ENCODE measurements at regions of chr2 and their contacts with region 1.

Region 1: GRCh38 chr2:205660521-205661124 is 21.7 kb upstream of the NRP2 start:
- DNase-seq: peak; percentile 98
- ATAC-seq: peak; percentile 90
- H3K4me3 ChIP-seq: no peak overlapping the region
- H3K27ac ChIP-seq: peak overlapping the region; percentile 40
- H3K4me1 ChIP-seq: peaks cover 23% of the 10 kb centered on the region
- H3K27me3 ChIP-seq: no peaks in the 10 kb centered on the region
- CTCF ChIP-seq: no peak
- POLR2A ChIP-seq: no peak
- RAD21 ChIP-seq: peak; percentile 5

Region 2: DNA sequence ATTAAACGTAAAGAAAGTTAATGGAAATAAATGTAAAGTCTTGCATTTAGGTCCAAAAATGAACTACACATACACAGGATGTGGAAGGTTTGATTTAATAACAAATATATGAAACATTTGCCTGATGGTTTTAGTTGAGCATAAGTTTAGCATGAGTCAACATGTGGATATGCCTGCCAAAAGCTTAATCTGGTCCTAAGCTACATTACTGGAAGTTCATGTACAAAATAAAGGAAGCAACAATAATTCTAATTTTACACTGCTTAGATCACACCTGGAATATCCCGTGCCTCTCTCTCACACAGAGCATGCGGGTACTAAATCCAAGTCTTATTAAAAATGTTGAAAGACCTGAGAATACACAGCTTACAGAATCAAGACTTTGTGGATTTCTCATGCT is 254.9 kb before region 1 on chr2:
- CTCF ChIA-PET with region 1: no interaction called
- POLR2A ChIA-PET with region 1: no interaction called
- dilution Hi-C with region 1: no loop called
- in situ Hi-C with region 1: loop called (anchors 10 kb)
- intact Hi-C with region 1: no loop called
- DNase-seq: peak; percentile 94
- ATAC-seq: peak; percentile 85
- H3K4me3 ChIP-seq: no peak overlapping the region; the same call in 1 of the 2 replicates
- H3K27ac ChIP-seq: peak overlapping the region; percentile 98
- H3K4me1 ChIP-seq: peaks cover 9% of the 10 kb centered on the region
- H3K27me3 ChIP-seq: no peaks in the 10 kb centered on the region
- CTCF ChIP-seq: no peak
- POLR2A ChIP-seq: no peak
- RAD21 ChIP-seq: no peak

Region 3: GRCh38 chr2:205580212-205580987 is 80.2 kb before region 1 on chr2:
- CTCF ChIA-PET with region 1: no interaction called
- POLR2A ChIA-PET with region 1: no interaction called
- dilution Hi-C with region 1: no loop called
- in situ Hi-C with region 1: no loop called
- intact Hi-C with region 1: loop called (anchors 2 kb)
- DNase-seq: peak; percentile 63
- ATAC-seq: peak; percentile 87
- H3K4me3 ChIP-seq: no peak overlapping the region
- H3K27ac ChIP-seq: no peak overlapping the region
- H3K4me1 ChIP-seq: peaks cover 3% of the 10 kb centered on the region
- H3K27me3 ChIP-seq: no peaks in the 10 kb centered on the region
- CTCF ChIP-seq: no peak
- POLR2A ChIP-seq: no peak
- RAD21 ChIP-seq: no peak